Activated naive CD4-positive, alpha-beta T cell treated with anti-CD3 and anti-CD28 coated beads for 36 hours (primary cell): ENCODE measurements at regions of chr5 and their contacts with region 1.

Region 1: GRCh38 chr5:43313035-43313853 is at the start of gene HMGCS1:
- DNase-seq: peak; percentile 100
- H3K4me3 Mint-ChIP-seq: peak within 1 kb of the TSS; percentile 99
- H3K27ac Mint-ChIP-seq: peak within 1 kb of the TSS; percentile 98
- H3K4me1 Mint-ChIP-seq: peaks cover 75% of the 10 kb centered on the region
- H3K27me3 Mint-ChIP-seq: no peaks in the 10 kb centered on the region
- total RNA-seq, gene HMGCS1: 105 TPM

Region 2: DNA sequence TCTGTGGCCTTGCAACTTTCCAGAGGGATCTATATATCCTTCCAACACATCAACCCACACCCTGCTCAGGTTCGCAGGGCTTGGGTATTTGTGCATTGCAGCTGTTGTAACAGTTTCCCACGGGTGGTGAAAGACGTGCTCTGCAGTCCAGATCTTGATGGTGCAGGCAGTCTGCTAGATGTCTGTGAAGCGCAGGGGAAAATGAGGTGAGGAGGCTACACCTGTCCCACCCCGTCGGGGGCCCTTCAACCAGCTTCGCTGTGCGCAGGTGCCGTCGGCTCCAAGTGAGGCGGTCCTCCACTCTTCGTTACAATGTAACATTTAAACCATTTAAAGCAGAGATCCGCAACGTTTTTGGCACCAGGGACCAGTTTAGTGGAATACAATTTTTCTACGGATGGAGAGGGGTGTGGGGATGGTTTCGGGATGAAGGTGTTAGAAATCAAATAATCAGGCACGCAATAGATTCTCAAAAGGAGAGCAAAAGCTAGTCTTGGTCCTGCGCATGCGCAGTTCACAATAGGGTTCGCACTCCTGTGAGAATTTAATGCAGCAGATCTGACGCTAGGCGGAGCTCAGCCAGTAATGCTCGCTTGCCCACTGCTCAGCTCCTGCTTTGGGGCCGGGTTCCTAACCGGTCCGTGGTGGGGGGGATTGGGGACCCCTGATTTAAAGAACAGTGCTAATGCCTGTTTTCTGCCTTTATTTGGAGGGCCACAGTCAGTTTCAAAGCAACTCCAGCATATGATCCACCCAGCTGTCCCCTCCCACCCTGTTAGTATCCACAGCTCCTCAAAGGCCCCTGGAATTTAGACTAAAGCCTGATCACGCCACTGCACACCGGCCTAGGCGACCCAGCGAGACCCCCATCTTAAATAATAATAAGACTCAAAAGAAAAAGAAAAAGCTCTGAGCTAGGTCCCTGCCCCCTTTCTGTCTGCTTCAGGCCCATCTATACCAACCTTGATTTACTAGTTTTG is 404.4 kb before region 1 on chr5:
- CTCF ChIA-PET with region 1: interaction called, 3 read pairs
- intact Hi-C with region 1: loop called (anchors 2 kb)
- DNase-seq: peak; percentile 94
- H3K4me3 Mint-ChIP-seq: peak overlapping the region; percentile 92
- H3K27ac Mint-ChIP-seq: peak overlapping the region; percentile 75
- H3K4me1 Mint-ChIP-seq: peaks cover 10% of the 10 kb centered on the region
- H3K27me3 Mint-ChIP-seq: peaks cover 10% of the 10 kb centered on the region

Region 3: GRCh38 chr5:43019614-43020293 is 293.5 kb before region 1 on chr5:
- CTCF ChIA-PET with region 1: no interaction called
- intact Hi-C with region 1: loop called (anchors 1 kb)
- DNase-seq: peak; percentile 90
- H3K4me3 Mint-ChIP-seq: peak overlapping the region; percentile 97
- H3K27ac Mint-ChIP-seq: peak overlapping the region; percentile 99
- H3K4me1 Mint-ChIP-seq: peaks cover 37% of the 10 kb centered on the region
- H3K27me3 Mint-ChIP-seq: no peaks in the 10 kb centered on the region

Region 4: DNA sequence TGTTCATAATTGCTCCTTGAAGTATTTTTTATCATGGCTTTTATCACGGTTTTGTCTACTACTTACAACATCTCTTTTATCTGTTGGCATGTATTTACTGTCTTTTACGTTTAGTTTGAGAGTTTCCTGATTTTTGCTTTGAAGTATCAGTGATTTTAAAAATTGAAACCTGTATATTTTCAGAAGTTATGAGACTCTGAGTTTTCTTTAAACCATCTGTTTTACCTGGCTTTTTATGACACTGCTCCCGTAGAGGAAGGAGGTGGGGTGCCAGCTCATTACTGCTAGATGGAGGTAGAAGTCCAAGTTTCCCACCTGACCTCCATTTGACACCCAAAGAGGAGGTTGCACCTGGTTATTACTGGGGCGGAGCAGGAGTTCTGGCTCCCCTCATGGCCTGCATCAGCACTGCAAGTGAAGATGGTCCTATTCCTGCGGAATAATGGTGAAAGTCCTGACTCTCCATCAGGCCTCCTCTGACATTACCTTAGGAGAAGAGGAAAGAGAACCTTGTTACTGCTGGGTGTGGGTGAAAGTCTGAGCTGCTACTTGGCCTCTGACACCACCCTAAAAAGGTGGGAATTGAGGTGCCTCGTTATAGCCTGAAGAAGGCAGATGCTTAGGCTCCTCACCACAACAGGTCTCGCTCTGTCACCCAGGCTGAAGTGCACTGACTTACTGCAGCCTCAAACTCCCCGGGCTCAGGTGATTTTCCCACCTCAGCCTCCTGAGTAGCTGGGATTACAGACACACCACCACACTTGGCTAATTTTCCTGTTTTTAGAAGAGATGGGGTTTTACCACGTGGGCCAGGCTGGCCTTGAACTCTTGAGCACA is 202.4 kb before region 1 on chr5:
- CTCF ChIA-PET with region 1: interaction called, 4 read pairs
- intact Hi-C with region 1: loop called (anchors 1 kb)
- DNase-seq: peak; percentile 81
- H3K4me3 Mint-ChIP-seq: no peak overlapping the region
- H3K27ac Mint-ChIP-seq: peak overlapping the region; percentile 71
- H3K4me1 Mint-ChIP-seq: peaks cover 43% of the 10 kb centered on the region
- H3K27me3 Mint-ChIP-seq: no peaks in the 10 kb centered on the region

Region 5: GRCh38 chr5:43336159-43336558 is 22.9 kb after region 1 on chr5:
- CTCF ChIA-PET with region 1: interaction called, 4 read pairs
- intact Hi-C with region 1: loop called (anchors 1 kb)
- DNase-seq: peak; percentile 40
- H3K4me3 Mint-ChIP-seq: no peak overlapping the region
- H3K27ac Mint-ChIP-seq: peak overlapping the region; percentile 84
- H3K4me1 Mint-ChIP-seq: peaks cover 12% of the 10 kb centered on the region
- H3K27me3 Mint-ChIP-seq: peaks cover 16% of the 10 kb centered on the region

Region 6: DNA sequence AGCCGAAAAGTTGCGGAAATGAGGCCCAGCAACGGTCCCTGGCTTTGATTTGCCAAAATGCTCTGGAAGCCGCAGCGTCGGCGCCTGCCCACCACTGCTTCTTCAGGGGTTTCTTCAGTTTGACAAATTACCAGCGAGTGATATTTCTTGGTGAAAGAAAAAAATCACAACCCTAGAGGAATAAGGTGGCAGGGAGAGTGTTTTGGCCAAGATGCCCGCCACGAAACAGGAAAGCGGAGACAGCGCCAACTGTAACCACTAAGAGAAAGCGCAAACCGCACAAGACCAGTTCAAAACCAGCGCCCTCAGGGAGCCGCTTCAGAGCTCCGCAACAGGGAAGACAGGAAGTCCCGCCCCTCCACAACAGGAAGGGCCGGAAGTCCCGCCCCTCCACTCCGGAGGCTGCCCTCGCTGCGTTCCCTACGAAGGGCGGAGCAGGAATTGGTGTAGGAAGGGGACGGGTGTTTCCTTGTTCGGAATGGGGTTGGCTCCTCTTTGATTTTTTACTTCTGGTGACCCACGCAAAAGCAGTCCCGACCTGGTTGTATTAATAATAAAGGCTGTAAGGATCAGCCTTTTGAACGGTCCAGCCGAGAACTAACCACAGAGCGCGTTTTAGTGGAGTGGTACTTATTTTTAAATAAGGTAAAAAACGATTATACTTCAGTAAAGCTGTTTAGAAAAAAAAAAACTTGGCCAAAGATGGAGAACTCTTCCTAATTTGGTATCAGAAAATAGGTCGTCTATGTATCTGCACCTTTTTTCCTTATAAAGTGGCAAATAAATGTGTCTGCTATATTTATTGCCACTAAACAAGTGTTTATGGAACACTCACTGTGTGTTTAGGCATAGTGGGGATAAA is 201.8 kb after region 1 on chr5 and contains the start of gene C5orf34:
- CTCF ChIA-PET with region 1: no interaction called
- intact Hi-C with region 1: loop called (anchors 1 kb)
- DNase-seq: peak; percentile 98
- H3K4me3 Mint-ChIP-seq: peak within 1 kb of the TSS; percentile 94
- H3K27ac Mint-ChIP-seq: peak within 1 kb of the TSS; percentile 99
- H3K4me1 Mint-ChIP-seq: peaks cover 25% of the 10 kb centered on the region
- H3K27me3 Mint-ChIP-seq: no peaks in the 10 kb centered on the region
- total RNA-seq, gene C5orf34: 14.7 to 16.3 TPM

Region 7: GRCh38 chr5:43573058-43573457 is 259.8 kb after region 1 on chr5:
- CTCF ChIA-PET with region 1: no interaction called
- intact Hi-C with region 1: no loop called
- DNase-seq: no peak
- H3K4me3 Mint-ChIP-seq: no peak overlapping the region
- H3K27ac Mint-ChIP-seq: no peak overlapping the region
- H3K4me1 Mint-ChIP-seq: no peaks in the 10 kb centered on the region
- H3K27me3 Mint-ChIP-seq: no peaks in the 10 kb centered on the region

Region 8: DNA sequence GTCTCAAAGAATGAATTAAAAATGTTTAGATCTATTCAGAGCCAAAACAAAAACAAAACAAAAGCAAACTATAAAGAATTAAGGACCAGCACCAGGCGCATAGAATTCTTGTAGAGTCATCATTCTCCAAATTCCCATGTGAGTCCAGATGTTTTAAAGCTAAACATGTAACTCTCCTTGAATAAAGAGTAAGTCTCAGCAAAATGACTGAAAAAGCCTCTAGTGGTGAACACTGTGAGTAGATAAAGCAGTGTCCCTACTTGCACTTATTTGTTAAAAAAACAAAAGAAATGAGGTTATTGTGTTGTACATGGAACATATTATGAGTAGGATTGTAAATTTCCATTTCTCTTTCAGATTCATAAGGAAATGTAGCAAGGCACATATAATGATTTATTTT is 333.7 kb after region 1 on chr5:
- CTCF ChIA-PET with region 1: no interaction called
- intact Hi-C with region 1: no loop called
- DNase-seq: no peak
- H3K4me3 Mint-ChIP-seq: no peak overlapping the region
- H3K27ac Mint-ChIP-seq: no peak overlapping the region
- H3K4me1 Mint-ChIP-seq: no peaks in the 10 kb centered on the region
- H3K27me3 Mint-ChIP-seq: no peaks in the 10 kb centered on the region

Region 9: DNA sequence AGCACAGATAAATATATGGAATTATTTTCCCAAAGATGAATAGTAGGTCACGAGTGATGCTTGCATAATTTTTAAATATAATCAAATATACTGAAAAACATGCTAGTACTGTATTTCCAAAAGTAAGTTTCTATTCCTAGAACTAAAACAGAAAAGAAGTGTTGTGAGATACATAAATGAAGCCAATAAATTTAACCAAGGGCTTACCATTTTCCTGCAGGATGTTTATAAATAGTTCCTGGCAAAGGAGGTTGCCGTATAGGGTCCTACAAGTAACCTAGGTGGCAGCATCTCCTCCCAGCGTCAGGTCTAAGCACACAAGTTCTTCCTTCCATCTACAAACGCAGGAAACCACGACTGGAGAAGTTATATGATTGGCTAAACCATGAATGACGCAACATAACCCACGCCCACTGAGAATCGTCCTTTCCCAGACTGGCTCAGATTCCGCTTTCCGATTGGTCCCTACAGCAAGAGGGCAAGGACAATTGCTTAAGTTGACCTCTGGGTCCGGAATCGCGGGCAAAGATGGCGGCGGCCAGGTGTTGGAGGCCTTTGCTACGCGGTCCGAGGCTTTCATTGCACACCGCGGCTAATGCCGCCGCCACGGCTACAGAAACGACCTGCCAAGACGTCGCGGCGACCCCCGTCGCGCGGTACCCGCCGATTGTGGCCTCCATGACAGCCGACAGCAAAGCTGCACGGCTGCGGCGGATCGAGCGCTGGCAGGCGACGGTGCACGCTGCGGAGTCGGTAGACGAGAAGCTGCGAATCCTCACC is 1495.4 kb after region 1 on chr5 and contains the start of gene MRPS30:
- CTCF ChIA-PET with region 1: no interaction called
- intact Hi-C with region 1: loop called (anchors 5 kb)
- DNase-seq: peak; percentile 96
- H3K4me3 Mint-ChIP-seq: peak within 1 kb of the TSS; percentile 96
- H3K27ac Mint-ChIP-seq: peak within 1 kb of the TSS; percentile 95
- H3K4me1 Mint-ChIP-seq: peaks cover 16% of the 10 kb centered on the region
- H3K27me3 Mint-ChIP-seq: peaks cover 1% of the 10 kb centered on the region
- total RNA-seq, gene MRPS30: 46.1 to 49.3 TPM